Right cardiac atrium (tissue), 5 donors: ENCODE measurements at regions of chr1 and their contacts with region 1.

Region 1: GRCh38 chr1:22114083-22115012 is 28.5 kb downstream of the WNT4 start:
- DNase-seq: peak; percentile 58 to 85 (median 78)
- ATAC-seq: peak; percentile 67 to 71
- H3K4me3 ChIP-seq: no peak overlapping the region
- H3K27ac ChIP-seq: no peak overlapping the region
- H3K4me1 ChIP-seq: peaks cover 23% of the 10 kb centered on the region
- H3K27me3 ChIP-seq: no peaks in the 10 kb centered on the region

Region 2: DNA sequence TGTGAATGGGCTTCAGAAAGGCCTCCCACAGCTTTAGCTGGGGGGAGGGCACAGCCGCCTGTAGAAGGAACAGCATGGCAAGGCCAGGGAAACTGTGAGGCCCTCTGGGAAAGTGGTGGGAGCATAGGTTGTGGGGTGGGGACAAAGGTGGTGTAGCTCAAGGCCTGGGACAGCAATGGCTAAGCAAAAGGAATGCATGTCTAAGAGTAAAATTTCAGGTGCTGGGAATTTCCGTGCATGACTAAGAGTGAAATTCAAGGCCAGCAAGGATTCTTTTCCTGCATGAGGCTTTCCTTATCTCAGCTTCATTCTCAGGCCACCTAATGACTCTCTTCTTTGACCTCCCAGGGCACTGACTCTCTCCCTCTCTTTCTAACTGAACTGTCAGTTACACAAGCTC is 115.0 kb after region 1 on chr1:
- intact Hi-C with region 1: no loop called
- DNase-seq: no peak
- ATAC-seq: no peak
- H3K4me3 ChIP-seq: no peak overlapping the region
- H3K27ac ChIP-seq: no peak overlapping the region
- H3K4me1 ChIP-seq: no peaks in the 10 kb centered on the region
- H3K27me3 ChIP-seq: no peaks in the 10 kb centered on the region

Region 3: GRCh38 chr1:22416555-22417454 is 302.5 kb after region 1 on chr1:
- intact Hi-C with region 1: loop called in 2 of 4 experiments (anchors 5 to 10 kb)
- DNase-seq: peak; percentile 58 to 84 (median 84)
- ATAC-seq: peak; percentile 39 to 49
- H3K4me3 ChIP-seq: no peak overlapping the region
- H3K27ac ChIP-seq: no peak overlapping the region
- H3K4me1 ChIP-seq: peaks cover 4% of the 10 kb centered on the region
- H3K27me3 ChIP-seq: no peaks in the 10 kb centered on the region